GM13977 (cell line): ENCODE measurements at regions of chrX and their contacts with region 1.

Region 1: DNA sequence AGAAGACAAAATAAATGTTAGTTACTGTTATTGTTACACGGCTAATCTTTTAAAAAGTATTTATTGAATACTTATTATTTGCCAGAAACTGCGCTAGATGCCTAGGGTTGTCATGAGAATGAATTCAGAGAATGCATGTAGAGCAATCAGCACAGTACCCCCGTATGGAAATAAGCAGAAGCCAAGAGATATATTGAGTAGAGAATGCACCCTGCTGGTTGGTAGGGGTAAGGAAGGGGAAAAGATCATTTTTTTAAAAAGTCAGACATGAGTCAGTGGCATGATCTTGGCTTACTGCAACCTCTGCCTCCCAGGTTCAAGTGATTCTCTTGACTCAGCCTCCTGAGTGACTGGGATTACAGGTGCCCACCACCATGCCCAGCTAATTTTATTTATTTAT is 13.1 kb upstream of the DRP2 start:
- DNase-seq: peak; percentile 32
- CTCF ChIP-seq: peak; percentile 47

Region 2: GRCh38 chrX:100895365-100896075 is 311.0 kb before region 1 on chrX:
- in situ Hi-C with region 1: loop called (anchors 25 kb)
- DNase-seq: no peak
- CTCF ChIP-seq: peak; percentile 60

Region 3: DNA sequence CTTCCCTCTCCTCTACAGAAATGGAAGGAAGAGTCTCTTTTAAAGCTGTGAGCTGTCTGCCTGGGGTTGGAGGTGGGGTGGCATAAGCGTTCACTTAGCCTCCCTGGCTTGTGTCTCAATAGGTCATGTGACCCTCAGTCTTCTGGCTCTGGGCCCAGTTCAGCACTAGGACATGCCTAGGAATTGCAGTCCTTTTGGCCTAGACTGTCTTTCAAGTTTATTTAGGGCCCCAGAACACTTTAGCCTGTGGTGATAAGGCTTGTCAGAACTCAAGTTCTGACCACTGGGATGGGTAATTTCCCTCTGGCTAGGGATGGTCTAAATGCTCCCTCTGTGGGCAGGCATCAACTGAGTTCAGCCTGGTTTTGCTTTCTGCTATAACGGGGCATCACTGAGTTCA is 244.5 kb after region 1 on chrX:
- in situ Hi-C with region 1: no loop called
- DNase-seq: no peak
- CTCF ChIP-seq: no peak